Activated CD4-positive, alpha-beta T cell treated with anti-CD3 and anti-CD28 coated beads, Interleukin-2, amount 10 ng/mL, durations not matched to agents 24 days and 14 days (primary cell): ENCODE measurements at regions of chr7 and their contacts with region 1.

Region 1: GRCh38 chr7:36152756-36153570 is at the start of gene EEPD1:
- DNase-seq: peak; percentile 100
- H3K4me3 Mint-ChIP-seq: peak within 1 kb of the TSS; percentile 82
- H3K27ac Mint-ChIP-seq: peak within 1 kb of the TSS; percentile 46
- H3K4me1 Mint-ChIP-seq: peaks cover 17% of the 10 kb centered on the region
- H3K27me3 Mint-ChIP-seq: peaks cover 10% of the 10 kb centered on the region
- total RNA-seq, gene EEPD1: 0.61 and 0.71 TPM in 2 replicates

Region 2: GRCh38 chr7:35037526-35038339 is 1115.2 kb before region 1 on chr7:
- intact Hi-C with region 1: loop called (anchors 5 kb)
- DNase-seq: peak; percentile 97
- H3K4me3 Mint-ChIP-seq: peak overlapping the region; percentile 86
- H3K27ac Mint-ChIP-seq: peak overlapping the region; percentile 78
- H3K4me1 Mint-ChIP-seq: peaks cover 24% of the 10 kb centered on the region
- H3K27me3 Mint-ChIP-seq: peaks cover 27% of the 10 kb centered on the region

Region 3: GRCh38 chr7:35975851-35976454 is 177.0 kb before region 1 on chr7:
- intact Hi-C with region 1: no loop called
- DNase-seq: peak; percentile 87
- H3K4me3 Mint-ChIP-seq: no peak overlapping the region
- H3K27ac Mint-ChIP-seq: no peak overlapping the region
- H3K4me1 Mint-ChIP-seq: peaks cover 3% of the 10 kb centered on the region
- H3K27me3 Mint-ChIP-seq: peaks cover 25% of the 10 kb centered on the region

Region 4: DNA sequence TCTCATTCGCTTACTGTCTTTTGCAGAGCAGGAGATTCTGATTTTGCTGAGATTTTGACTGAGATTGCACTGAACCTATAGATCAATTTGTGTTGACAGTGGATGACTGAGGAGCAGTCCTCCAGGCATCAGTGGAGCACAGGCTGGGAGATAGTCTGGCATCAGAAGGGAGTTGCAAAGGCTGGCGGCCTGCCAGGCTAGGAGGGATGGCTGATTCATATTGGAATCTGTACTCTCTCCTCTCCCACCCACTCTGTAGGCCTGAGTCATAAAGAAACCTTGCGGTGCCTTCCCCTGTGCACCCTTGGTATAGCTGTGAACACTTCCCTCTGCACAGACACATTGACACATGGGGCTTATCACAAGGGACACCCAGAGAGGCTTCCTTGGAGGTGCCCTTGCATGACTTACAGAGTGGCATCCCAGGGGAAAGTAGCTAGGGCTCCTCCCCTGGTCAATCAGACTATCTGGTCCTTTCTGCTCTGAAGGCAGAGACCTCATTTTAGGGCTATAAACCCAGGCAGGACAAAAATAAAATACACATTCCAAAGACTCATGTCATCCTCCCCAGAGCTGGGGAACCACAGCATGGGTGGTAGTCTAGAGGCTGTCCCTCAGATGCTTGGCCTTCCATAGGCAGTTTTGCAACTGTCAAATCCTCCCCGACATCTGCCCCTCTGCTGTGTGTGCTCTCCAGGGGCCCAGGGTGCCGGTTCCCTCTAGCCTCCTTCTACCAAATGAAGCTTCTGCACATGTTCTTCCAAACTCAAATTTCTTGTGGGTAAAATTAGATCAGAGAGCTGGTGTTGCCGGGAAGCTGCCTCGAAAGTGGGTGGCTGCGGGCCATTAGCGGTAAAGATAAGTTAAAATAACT is 37.3 kb before region 1 on chr7:
- intact Hi-C with region 1: loop called (anchors 1 kb)
- DNase-seq: peak; percentile 83
- H3K4me3 Mint-ChIP-seq: no peak overlapping the region
- H3K27ac Mint-ChIP-seq: peak overlapping the region; percentile 36
- H3K4me1 Mint-ChIP-seq: peaks cover 21% of the 10 kb centered on the region
- H3K27me3 Mint-ChIP-seq: peaks cover 28% of the 10 kb centered on the region

Region 5: DNA sequence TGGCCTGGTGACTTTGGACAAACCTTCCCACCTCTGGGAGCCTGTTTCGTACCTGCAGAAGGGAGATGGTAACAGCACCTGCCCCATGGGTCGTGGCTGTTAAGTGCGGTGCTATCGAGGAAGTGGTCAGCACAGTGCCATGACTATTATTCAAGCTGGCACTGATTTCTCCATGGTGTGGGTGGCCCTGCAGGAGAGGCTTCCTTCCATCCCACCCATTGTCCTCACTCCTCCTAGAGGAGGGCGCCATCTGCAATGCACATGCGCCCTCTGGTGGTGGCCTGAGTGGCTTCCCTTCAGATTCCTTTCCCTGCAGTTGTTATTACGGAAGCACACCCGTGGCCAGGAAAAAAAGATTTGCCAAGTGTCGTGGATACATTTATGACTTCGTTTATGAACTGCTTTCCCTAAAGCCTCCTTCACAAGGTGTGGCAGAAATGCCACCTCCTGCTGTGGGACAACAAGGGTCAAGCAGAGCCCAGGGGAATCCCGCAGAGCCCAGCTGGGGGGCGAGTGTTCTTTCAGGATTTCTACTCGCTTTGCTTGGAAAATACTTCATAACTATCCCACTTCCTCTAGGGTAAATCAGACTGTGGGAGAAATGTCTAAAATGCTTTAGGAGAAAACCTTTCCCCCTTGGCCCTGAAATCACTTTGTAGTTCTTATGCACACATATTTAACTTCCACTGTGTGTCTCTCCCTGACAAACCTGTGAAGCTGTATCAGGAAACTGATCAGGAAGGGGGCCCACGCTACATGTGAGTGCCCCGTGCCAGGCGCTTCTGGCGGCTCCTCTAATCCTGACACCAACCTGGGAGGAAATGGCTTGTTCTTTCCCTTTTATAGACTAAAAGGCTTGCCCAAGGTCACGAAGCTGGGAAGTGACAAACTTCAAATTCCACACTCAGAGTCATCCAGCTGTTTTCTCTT is 138.7 kb after region 1 on chr7:
- intact Hi-C with region 1: loop called (anchors 2 kb)
- DNase-seq: peak; percentile 91
- H3K4me3 Mint-ChIP-seq: peak overlapping the region; percentile 77
- H3K27ac Mint-ChIP-seq: no peak overlapping the region
- H3K4me1 Mint-ChIP-seq: peaks cover 40% of the 10 kb centered on the region
- H3K27me3 Mint-ChIP-seq: no peaks in the 10 kb centered on the region

Region 6: GRCh38 chr7:36366718-36367560 is 214.0 kb after region 1 on chr7:
- intact Hi-C with region 1: loop called (anchors 1 kb)
- DNase-seq: peak; percentile 98
- H3K4me3 Mint-ChIP-seq: peak overlapping the region; percentile 91
- H3K27ac Mint-ChIP-seq: peak overlapping the region; percentile 36
- H3K4me1 Mint-ChIP-seq: peaks cover 4% of the 10 kb centered on the region
- H3K27me3 Mint-ChIP-seq: peaks cover 37% of the 10 kb centered on the region

Region 7: DNA sequence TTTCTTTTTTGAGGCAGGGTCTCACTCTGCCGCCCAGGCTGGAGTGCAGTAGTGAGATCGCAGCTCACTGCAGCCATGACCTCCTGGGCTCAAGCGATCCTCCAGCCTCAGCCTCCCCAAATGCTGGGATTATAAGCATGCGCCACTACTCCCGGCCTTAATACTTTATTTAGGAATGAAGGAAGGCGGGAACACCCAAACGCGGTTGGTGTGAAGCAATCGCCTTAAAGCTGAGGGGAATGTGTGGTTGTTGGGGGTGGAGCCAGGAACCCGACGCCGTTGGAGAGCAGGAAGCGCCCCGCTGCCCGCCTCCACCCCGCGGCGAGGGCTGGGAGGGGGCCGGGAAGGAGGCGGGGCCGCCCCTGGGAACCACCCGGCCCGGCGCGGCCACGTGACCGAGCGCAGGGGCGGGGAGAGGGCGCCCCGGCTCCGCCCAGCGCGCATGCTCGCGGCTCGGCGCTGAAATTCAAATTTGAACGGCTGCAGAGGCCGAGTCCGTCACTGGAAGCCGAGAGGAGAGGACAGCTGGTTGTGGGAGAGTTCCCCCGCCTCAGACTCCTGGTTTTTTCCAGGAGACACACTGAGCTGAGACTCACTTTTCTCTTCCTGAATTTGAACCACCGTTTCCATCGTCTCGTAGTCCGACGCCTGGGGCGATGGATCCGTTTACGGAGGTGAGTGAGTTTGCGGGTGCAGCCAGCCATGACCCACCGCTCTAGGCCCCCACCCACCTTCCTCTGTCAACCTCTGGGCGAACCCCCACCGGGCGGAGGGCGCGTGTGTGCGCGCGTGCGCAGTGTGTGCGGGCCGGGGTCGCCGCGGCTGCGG is 236.6 kb after region 1 on chr7 and contains the start of gene ANLN:
- intact Hi-C with region 1: loop called (anchors 1 kb)
- DNase-seq: peak; percentile 97
- H3K4me3 Mint-ChIP-seq: peak within 1 kb of the TSS; percentile 92
- H3K27ac Mint-ChIP-seq: peak within 1 kb of the TSS; percentile 85
- H3K4me1 Mint-ChIP-seq: peaks cover 33% of the 10 kb centered on the region
- H3K27me3 Mint-ChIP-seq: peaks cover 12% of the 10 kb centered on the region
- total RNA-seq, gene ANLN: 35.6 and 35.9 TPM in 2 replicates